Sigmoid colon (tissue), 7 donors: ENCODE measurements at regions of chr19 and their contacts with region 1.

Region 1: GRCh38 chr19:12796146-12797071 is 5.1 kb downstream of the JUNB start:
- DNase-seq: peak; percentile 91
- H3K4me3 ChIP-seq: no peak overlapping the region
- H3K27ac ChIP-seq: peak overlapping the region; percentile 35 to 100 (median 78)
- H3K4me1 ChIP-seq: peaks cover 0 to 38% (median 34%) of the 10 kb centered on the region in 4 donors
- H3K27me3 ChIP-seq: no peaks in the 10 kb centered on the region
- CTCF ChIP-seq: peak; percentile 95 to 99 (median 98)
- EP300 ChIP-seq: no peak
- POLR2A ChIP-seq: no peak

Region 2: DNA sequence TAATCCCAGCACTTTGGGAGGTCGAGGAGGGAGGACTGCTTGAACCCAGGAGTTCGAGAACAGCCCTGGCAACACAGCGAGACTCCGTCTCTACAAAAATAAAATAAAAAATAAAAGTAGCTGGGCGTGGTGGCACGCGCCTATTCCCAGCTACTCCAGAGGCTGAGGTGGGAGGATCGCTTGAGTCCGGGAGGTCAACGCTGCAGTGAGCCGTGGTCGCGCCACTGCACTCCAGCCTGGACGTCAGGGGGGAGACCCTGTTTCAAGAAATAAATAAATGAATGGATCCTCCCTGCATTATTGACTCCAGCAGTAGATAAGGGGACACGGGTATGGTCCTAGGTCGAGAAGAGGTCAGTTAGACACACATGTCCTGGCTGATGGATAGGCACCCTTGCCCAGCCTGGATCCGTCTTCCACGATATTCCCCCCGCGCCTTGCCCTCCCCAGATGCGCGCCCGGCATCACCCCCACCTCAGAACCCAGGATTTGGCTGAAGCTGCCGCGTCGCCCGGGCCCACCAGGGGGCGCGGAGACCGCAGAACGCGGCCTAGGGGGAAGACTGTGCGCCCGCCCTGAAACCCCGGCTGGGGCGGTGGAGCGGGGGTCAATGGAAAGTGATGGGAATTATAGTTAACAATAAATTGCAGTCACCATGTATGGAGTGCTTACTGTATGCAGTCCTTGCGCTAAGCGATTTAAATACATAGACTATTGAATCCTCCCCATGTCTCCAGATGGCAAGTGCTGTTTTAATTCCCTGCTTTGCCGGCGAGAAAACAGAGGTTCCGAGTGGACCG is 19.0 kb before region 1 on chr19:
- intact Hi-C with region 1: loop called (anchors 1 kb)
- DNase-seq: peak; percentile 90
- H3K4me3 ChIP-seq: peak overlapping the region; percentile 44 to 67 (median 54)
- H3K27ac ChIP-seq: peak overlapping the region; percentile 89 to 97 (median 94)
- H3K4me1 ChIP-seq: peaks cover 0 to 51% (median 34%) of the 10 kb centered on the region in 4 donors
- H3K27me3 ChIP-seq: no peaks in the 10 kb centered on the region
- CTCF ChIP-seq: peak; percentile 96 to 98 (median 98)
- EP300 ChIP-seq: peak in 1 of 4 donors; percentile 23
- POLR2A ChIP-seq: no peak